Sigmoid colon (tissue), 7 donors: ENCODE measurements at regions of chr10 and their contacts with region 1.

Region 1: DNA sequence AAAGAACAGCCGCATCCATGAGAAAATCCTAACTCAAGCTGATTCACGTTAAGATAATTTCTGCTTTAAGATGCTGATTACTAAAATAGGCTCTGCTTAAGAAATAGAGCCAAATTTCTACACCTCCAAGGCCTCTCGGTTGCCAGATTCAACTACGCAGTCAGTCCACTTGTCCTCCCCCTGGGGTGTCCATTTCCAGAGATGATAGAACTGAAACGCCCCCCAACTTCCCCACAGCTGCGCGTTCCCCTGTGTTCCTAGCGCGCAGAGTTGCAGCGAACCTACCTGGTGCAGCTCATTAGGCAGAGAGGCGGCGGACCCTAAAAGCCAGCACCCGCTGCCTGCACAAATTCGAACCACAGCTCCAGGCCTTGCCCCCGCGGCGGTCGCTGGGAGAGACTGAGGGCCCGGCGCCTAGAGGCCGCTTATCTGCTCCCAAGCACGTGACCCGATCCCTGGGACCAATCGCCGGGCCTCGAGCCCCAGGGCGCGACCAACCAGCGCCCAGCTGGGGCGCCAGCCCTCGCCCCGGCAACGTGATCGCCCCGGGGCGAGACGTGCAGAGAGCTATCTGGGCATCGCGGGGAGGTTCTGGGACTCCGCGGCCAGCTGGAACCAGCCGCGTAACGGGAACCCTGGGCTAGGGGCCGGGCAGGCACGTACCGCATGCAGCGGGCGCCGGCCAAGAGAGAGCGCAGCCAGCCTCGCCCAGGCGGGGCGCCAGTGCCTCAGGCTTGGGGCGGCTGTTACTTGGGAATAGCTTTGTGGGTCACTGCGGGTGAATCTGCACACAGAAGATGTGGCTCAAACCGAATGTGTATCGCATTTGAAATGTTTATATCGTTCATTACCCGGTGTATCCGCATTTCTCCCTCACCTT is at the start of gene PPP1R3C:
- DNase-seq: peak; percentile 96
- H3K4me3 ChIP-seq: peak within 1 kb of the TSS; percentile 57 to 77 (median 60)
- H3K27ac ChIP-seq: peak within 1 kb of the TSS; percentile 77 to 93 (median 86)
- H3K4me1 ChIP-seq: peaks cover 0 to 57% (median 43%) of the 10 kb centered on the region in 4 donors
- H3K27me3 ChIP-seq: no peaks in the 10 kb centered on the region
- CTCF ChIP-seq: peak in 2 of 4 experiments; percentile 10 to 17
- EP300 ChIP-seq: peak in 1 of 4 donors; percentile 28
- POLR2A ChIP-seq: peak; percentile 86 to 92
- total RNA-seq, gene PPP1R3C: 23.7 to 40.0 (median 34.4) TPM

Region 2: DNA sequence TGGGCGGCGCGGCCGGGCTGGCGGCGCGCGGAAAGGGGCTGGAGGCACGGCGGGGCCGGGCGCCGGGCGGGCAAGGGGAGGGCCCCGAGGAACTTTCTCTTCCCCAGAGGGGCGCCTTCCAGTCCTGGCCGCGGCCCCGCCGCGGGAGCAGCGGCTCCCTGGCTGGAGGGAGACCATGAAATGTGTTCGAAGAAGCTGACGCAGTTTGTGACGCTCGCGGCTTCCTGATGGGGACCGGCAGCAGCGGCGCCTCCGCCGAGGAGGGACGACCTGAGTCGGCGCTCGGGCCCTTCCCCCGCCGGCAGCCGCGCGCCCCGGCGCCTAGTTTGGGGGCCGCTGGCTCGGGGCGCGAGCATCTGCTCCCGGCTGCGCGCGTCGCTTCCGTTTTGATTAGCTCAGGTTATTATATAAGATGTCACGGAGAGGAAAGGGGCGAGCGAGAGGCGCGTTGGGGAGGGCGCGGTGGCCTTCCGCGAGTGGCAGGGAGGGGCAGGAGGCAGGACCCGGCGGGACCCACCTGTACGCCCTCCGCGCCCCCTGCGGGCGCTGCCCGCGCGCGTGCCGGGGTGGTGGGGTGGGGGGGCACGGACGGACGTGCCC is 469.5 kb before region 1 on chr10:
- intact Hi-C with region 1: loop called (anchors 10 kb)
- DNase-seq: peak; percentile 81
- H3K4me3 ChIP-seq: peak overlapping the region; percentile 81 to 91 (median 90)
- H3K27ac ChIP-seq: peak overlapping the region; percentile 93 to 98 (median 96)
- H3K4me1 ChIP-seq: peaks cover 0 to 24% (median 16%) of the 10 kb centered on the region in 4 donors
- H3K27me3 ChIP-seq: no peaks in the 10 kb centered on the region
- CTCF ChIP-seq: no peak
- EP300 ChIP-seq: no peak
- POLR2A ChIP-seq: no peak

Region 3: DNA sequence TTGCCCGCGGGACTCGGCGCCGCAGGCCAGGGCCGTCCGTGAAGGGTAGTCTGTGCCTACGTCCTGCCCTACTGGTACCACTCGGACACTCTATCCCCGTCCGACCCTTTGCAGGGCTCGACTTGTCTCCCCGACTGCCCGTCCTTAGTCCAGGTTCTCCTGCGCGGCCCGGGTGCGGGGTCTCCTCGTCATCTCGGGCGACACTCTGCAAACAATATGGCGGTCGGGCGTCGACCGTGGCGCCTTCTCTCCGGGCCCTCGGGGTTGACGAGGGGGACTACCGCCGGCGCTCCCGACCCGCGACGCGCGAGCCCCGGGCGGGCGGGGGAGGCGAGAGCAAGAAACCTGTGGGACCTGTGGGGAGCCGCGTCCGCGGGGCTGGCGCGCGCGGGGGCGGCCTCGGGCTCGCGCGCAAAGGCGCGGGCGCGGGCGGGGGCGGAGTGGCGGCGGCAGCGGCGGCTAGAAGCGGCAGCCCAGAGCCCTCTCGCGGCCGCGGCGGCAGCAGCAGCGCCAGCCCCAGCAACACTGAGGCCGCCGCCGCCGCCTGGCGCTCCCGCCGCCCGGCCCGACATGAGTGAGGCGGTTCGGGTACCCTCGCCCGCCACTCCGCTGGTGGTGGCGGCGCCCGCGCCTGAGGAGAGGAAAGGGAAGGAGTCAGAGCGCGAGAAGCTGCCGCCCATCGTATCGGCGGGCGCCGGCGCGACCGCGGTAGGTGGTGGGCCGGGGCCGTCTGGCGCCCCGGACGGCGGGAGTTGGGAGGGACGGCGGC is 222.9 kb before region 1 on chr10 and contains the start of gene HECTD2:
- intact Hi-C with region 1: loop called (anchors 1 kb)
- DNase-seq: peak; percentile 88
- H3K4me3 ChIP-seq: peak within 1 kb of the TSS; percentile 67 to 90 (median 77)
- H3K27ac ChIP-seq: peak within 1 kb of the TSS; percentile 93 to 99 (median 98)
- H3K4me1 ChIP-seq: peaks cover 0 to 30% (median 13%) of the 10 kb centered on the region in 4 donors
- H3K27me3 ChIP-seq: no peaks in the 10 kb centered on the region
- CTCF ChIP-seq: peak in 1 of 4 experiments; percentile 34
- EP300 ChIP-seq: no peak
- POLR2A ChIP-seq: peak in 1 of 2 donors; percentile 6
- total RNA-seq, gene HECTD2: 25.5 to 29.3 (median 27.9) TPM

Region 4: DNA sequence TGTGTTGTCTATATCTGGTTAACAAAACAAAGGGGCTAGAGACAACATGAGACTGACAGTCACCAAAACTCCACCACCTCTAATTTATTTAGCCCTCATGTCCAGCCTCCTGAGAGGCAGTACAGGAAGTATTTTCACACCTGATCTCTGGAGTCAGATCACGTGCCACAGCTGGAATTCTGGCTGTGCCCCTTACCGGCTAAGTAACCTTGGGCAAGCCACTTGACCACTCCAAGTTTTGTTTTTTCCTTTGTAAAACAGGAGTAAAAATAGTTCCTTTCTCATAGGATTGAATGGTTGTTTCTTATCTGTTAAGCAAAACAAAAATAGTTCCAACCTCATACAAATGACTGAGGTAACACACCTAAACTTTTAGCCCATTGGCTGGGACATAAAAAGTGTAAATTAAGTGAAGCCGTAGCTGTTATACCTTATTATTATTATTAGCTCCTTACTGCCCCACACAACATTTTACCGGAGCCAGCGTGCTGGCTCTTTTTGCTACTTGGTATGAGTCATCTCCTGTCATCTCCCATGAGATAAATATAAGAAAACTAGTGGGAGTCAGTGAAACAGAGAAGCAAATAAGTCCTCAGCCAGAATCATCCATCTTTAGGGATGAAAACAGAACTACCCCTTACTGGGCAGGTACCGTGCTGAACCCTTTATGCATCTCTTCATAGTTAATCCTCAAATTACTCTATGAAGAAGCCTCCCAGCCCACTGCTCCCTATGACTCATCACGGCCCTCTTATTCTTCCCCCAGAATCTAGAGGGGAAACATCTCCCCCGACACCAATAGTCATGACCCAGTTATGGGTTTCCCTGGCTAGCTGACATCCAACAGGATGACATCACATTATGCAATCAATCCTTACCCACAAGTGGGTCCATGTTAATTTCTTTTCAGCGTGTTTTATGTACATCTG is 44.9 kb before region 1 on chr10:
- intact Hi-C with region 1: loop called (anchors 2 kb)
- DNase-seq: no peak
- H3K4me3 ChIP-seq: no peak overlapping the region
- H3K27ac ChIP-seq: peak overlapping the region; percentile 85 to 95 (median 90)
- H3K4me1 ChIP-seq: peaks cover 2 to 62% (median 58%) of the 10 kb centered on the region in 4 donors
- H3K27me3 ChIP-seq: no peaks in the 10 kb centered on the region
- CTCF ChIP-seq: no peak
- EP300 ChIP-seq: no peak
- POLR2A ChIP-seq: no peak

Region 5: GRCh38 chr10:91797874-91798648 is 165.2 kb after region 1 on chr10 and contains the start of gene TNKS2:
- intact Hi-C with region 1: loop called (anchors 10 kb)
- DNase-seq: peak; percentile 96
- H3K4me3 ChIP-seq: peak within 1 kb of the TSS; percentile 74 to 97 (median 92)
- H3K27ac ChIP-seq: peak within 1 kb of the TSS; percentile 96 to 99 (median 98)
- H3K4me1 ChIP-seq: peaks cover 0 to 48% (median 41%) of the 10 kb centered on the region in 4 donors
- H3K27me3 ChIP-seq: no peaks in the 10 kb centered on the region
- CTCF ChIP-seq: no peak
- EP300 ChIP-seq: peak in 1 of 4 donors; percentile 26
- POLR2A ChIP-seq: peak; percentile 83 to 85
- total RNA-seq, gene TNKS2: 37.4 to 46.7 (median 40.5) TPM